ENCODE measurements at regions of chr1 and their contacts with region 1.

Region 1: GRCh38 chr1:89454845-89455521 is 69.6 kb upstream of the LRRC8B start:
- DNase-seq: peak; percentile 79
- ATAC-seq: peak; percentile 64
- H3K4me3 Mint-ChIP-seq: no peak overlapping the region
- H3K27ac Mint-ChIP-seq: no peak overlapping the region
- H3K4me1 Mint-ChIP-seq: peaks cover 29% of the 10 kb centered on the region
- H3K27me3 Mint-ChIP-seq: peaks cover 21% of the 10 kb centered on the region
- CTCF ChIP-seq: peak; percentile 90

Region 2: DNA sequence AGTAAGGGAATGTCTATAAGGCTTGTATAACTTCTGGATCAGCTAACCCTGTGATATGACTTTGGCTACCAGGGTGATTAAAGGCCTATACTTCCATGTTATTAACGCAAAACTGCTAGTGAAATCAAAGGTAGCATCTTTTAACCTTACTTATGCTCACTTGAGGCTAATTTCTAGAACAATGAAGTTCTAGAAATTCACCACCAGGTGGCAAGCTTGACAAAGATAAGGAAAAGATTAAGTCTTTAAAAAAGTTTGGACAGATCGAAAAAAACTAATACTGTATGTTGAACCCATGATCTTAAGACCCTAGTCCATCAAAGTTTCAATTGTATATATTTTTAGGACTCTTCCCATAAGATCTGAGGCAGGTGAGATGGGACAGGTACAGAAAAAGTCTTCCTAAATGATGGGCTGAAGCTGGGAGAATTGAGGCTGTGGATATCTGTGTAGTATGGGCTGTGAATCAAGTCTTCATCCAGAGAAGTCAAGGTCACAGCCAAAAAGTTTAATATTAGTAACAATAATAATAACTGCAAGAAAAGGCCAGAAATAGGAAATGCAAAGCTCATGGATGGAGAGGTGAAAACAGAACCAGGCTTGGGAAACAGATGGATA is 481.4 kb before region 1 on chr1:
- CTCF ChIA-PET with region 1: interaction called, 18 read pairs
- POLR2A ChIA-PET with region 1: no interaction called
- intact Hi-C with region 1: no loop called
- DNase-seq: no peak
- ATAC-seq: peak; percentile 68
- H3K4me3 Mint-ChIP-seq: no peak overlapping the region
- H3K27ac Mint-ChIP-seq: no peak overlapping the region
- H3K4me1 Mint-ChIP-seq: peaks cover 32% of the 10 kb centered on the region
- H3K27me3 Mint-ChIP-seq: no peaks in the 10 kb centered on the region
- CTCF ChIP-seq: peak; percentile 78

Region 3: GRCh38 chr1:88983791-88984559 is 471.0 kb before region 1 on chr1:
- CTCF ChIA-PET with region 1: interaction called, 14 read pairs
- POLR2A ChIA-PET with region 1: interaction called, 6 read pairs
- intact Hi-C with region 1: no loop called
- DNase-seq: peak; percentile 48
- ATAC-seq: peak; percentile 63
- H3K4me3 Mint-ChIP-seq: peak overlapping the region; percentile 6
- H3K27ac Mint-ChIP-seq: peak overlapping the region; percentile 87
- H3K4me1 Mint-ChIP-seq: peaks cover 86% of the 10 kb centered on the region
- H3K27me3 Mint-ChIP-seq: no peaks in the 10 kb centered on the region
- CTCF ChIP-seq: peak; percentile 77

Region 4: GRCh38 chr1:89085781-89086180 is 369.2 kb before region 1 on chr1:
- CTCF ChIA-PET with region 1: interaction called, 11 read pairs
- POLR2A ChIA-PET with region 1: no interaction called
- intact Hi-C with region 1: no loop called
- DNase-seq: peak; percentile 59
- ATAC-seq: no peak
- H3K4me3 Mint-ChIP-seq: no peak overlapping the region
- H3K27ac Mint-ChIP-seq: no peak overlapping the region
- H3K4me1 Mint-ChIP-seq: peaks cover 7% of the 10 kb centered on the region
- H3K27me3 Mint-ChIP-seq: no peaks in the 10 kb centered on the region
- CTCF ChIP-seq: peak; percentile 42

Region 5: GRCh38 chr1:89198491-89199072 is 256.4 kb before region 1 on chr1 and contains the start of gene GBP4:
- CTCF ChIA-PET with region 1: interaction called, 3 read pairs
- POLR2A ChIA-PET with region 1: no interaction called
- intact Hi-C with region 1: loop called (anchors 5 kb)
- DNase-seq: peak; percentile 61
- ATAC-seq: peak; percentile 58
- H3K4me3 Mint-ChIP-seq: peak within 1 kb of the TSS; percentile 92
- H3K27ac Mint-ChIP-seq: peak within 1 kb of the TSS; percentile 97
- H3K4me1 Mint-ChIP-seq: peaks cover 76% of the 10 kb centered on the region
- H3K27me3 Mint-ChIP-seq: no peaks in the 10 kb centered on the region
- CTCF ChIP-seq: no peak
- total RNA-seq, gene GBP4: 34.2 to 38.3 TPM

Region 6: GRCh38 chr1:89381618-89382017 is 73.4 kb before region 1 on chr1:
- CTCF ChIA-PET with region 1: interaction called, 3 read pairs
- POLR2A ChIA-PET with region 1: no interaction called
- intact Hi-C with region 1: loop called (anchors 5 kb)
- DNase-seq: no peak
- ATAC-seq: no peak
- H3K4me3 Mint-ChIP-seq: no peak overlapping the region
- H3K27ac Mint-ChIP-seq: no peak overlapping the region
- H3K4me1 Mint-ChIP-seq: peaks cover 9% of the 10 kb centered on the region
- H3K27me3 Mint-ChIP-seq: no peaks in the 10 kb centered on the region
- CTCF ChIP-seq: no peak

Measured in activated CD8-positive, alpha-beta T cell treated with anti-CD3 and anti-CD28 coated beads for 36 hours (primary cell).